Thyroid gland (tissue), 4 donors: ENCODE measurements at regions of chr2 and their contacts with region 1.

Region 1: DNA sequence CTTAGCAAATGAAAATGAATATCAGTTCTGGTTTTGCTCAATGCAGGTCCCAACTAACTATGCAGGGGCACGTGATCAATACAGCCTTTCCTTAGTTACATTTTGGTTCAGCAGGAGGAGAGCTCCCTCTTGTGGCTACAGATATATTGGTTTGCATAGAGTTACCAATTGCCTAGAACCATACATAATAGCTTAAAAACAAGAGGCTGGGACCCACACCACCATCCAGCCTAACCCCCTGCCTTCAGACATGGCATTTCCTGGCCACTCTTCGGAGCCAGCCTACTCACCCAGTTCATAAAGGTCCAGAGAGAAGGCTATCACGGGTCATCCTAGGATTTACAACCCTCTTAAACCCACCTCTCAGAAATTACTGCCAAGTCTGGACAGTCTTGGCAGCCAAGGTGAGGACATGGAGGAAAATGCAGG is 10.5 kb downstream of the CCDC93 start:
- DNase-seq: peak; percentile 47 to 48
- H3K4me3 ChIP-seq: no peak overlapping the region
- H3K27ac ChIP-seq: no peak overlapping the region
- H3K4me1 ChIP-seq: peaks cover 2 to 6% of the 10 kb centered on the region in 2 donors
- H3K27me3 ChIP-seq: no peaks in the 10 kb centered on the region
- CTCF ChIP-seq: peak; percentile 71 to 95 (median 86)
- POLR2A ChIP-seq: no peak

Region 2: DNA sequence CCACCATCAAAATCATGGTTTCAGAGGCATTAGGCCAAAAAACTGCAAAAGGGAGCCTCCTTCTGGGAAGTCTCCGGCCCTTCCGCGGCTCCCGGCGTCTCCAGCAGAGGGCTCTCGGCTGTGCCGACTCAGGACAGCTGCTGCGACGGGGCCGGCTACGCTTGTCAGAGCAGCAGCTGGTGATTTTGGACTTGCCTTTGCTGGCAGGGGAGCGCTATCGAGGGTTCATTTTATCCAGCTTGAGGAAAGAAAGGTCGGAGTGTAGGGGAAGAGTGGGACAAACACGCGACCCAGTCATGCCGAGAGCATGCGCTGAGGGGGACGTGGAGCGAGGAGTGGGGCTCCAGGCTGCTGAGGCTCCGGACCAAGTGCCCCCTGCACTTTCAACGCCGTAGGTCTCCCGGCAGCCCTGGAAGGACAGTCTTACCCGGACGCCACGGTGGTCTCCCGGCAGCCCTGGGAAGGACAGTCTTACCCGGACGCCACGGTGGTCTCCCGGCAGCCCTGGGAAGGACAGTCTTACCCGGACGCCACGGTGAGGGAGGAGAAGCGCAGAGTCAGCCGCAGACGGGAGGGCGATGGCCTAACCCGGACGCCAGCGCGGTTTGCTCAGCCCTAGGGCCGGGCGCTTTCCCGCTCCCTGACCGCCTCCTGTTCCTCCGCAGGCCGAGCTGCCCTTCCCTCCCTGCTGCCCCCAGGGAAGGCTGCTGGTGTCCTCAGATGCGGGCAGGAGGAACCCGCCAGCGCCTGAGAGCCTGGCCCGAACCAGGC is 167.2 kb before region 1 on chr2:
- intact Hi-C with region 1: loop called (anchors 5 kb)
- DNase-seq: peak; percentile 87 to 92
- H3K4me3 ChIP-seq: peak overlapping the region in 2 of 3 donors; percentile 30 to 37
- H3K27ac ChIP-seq: peak overlapping the region in 1 of 3 donors; percentile 31
- H3K4me1 ChIP-seq: peaks cover 0 to 9% of the 10 kb centered on the region in 2 donors
- H3K27me3 ChIP-seq: no peaks in the 10 kb centered on the region
- CTCF ChIP-seq: peak; percentile 68 to 91 (median 82)
- POLR2A ChIP-seq: peak in 1 of 2 donors; percentile 10

Region 3: DNA sequence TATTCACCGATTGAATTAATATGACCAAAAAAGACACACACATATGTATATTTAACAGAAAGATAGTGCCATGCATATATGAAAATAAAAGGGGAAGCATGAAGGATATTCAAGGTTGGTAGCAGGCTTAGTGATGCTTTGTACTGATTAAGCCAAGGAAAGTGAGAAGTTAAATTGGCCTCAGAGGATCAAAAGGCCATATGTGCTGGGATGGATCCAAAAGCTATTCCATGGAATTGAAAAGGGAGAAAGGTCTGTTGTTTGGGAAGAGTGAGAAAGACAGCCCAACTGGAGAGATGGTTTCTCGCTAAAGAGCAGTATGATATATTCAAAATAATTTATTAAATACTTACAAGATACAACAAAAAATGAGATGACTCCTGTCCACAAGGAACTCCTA is 150.8 kb after region 1 on chr2:
- intact Hi-C with region 1: no loop called
- DNase-seq: no peak
- H3K4me3 ChIP-seq: no peak overlapping the region
- H3K27ac ChIP-seq: no peak overlapping the region
- H3K4me1 ChIP-seq: no peaks in the 10 kb centered on the region
- H3K27me3 ChIP-seq: no peaks in the 10 kb centered on the region
- CTCF ChIP-seq: no peak
- POLR2A ChIP-seq: no peak